HepG2 (cell line): ENCODE measurements at regions of chr11 and their contacts with region 1.

Region 1: GRCh38 chr11:36235750-36236149 is 53.5 kb downstream of the COMMD9 start:
- DNase-seq: peak; percentile 5
- ATAC-seq: no peak
- H3K4me3 ChIP-seq: no peak overlapping the region
- H3K27ac ChIP-seq: no peak overlapping the region
- H3K4me1 ChIP-seq: no peaks in the 10 kb centered on the region
- H3K27me3 ChIP-seq: no peaks in the 10 kb centered on the region
- CTCF ChIP-seq: no peak
- EP300 ChIP-seq: no peak
- POLR2A ChIP-seq: no peak
- RAD21 ChIP-seq: no peak

Region 2: DNA sequence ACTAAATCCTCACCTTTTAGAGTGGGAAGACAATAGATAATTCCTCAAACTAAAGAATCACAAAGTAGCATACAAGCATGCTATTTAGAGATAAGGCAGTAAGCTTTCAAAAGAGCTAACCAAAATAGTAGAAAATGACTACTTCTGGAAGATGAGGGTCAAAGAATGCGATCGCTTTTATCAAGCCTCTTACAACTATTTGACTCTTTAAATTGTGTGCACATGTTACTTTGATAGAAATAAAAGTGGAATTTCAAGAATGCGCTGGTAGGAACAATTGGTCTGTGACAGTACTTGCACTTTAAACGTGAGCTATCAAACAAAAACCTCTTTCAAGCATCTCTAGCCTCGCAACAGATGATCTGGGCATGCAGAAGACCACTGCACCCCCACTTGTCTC is 43.8 kb before region 1 on chr11:
- CTCF ChIA-PET with region 1: no interaction called
- POLR2A ChIA-PET with region 1: no interaction called
- in situ Hi-C with region 1: no loop called
- intact Hi-C with region 1: loop called (anchors 1 kb)
- DNase-seq: no peak
- ATAC-seq: no peak
- H3K4me3 ChIP-seq: no peak overlapping the region
- H3K27ac ChIP-seq: no peak overlapping the region
- H3K4me1 ChIP-seq: no peaks in the 10 kb centered on the region; the same call in 1 of the 2 replicates
- H3K27me3 ChIP-seq: no peaks in the 10 kb centered on the region
- CTCF ChIP-seq: no peak
- EP300 ChIP-seq: no peak
- POLR2A ChIP-seq: no peak
- RAD21 ChIP-seq: no peak

Region 3: GRCh38 chr11:36455658-36456111 is 219.9 kb after region 1 on chr11:
- CTCF ChIA-PET with region 1: no interaction called
- POLR2A ChIA-PET with region 1: no interaction called
- in situ Hi-C with region 1: no loop called
- intact Hi-C with region 1: no loop called
- DNase-seq: no peak
- ATAC-seq: peak; percentile 48
- H3K4me3 ChIP-seq: no peak overlapping the region
- H3K27ac ChIP-seq: no peak overlapping the region
- H3K4me1 ChIP-seq: peaks cover 23% of the 10 kb centered on the region
- H3K27me3 ChIP-seq: peaks cover 3 to 19% of the 10 kb centered on the region in 2 experiments; a peak in 2 of 5 replicates
- CTCF ChIP-seq: no peak
- EP300 ChIP-seq: no peak
- POLR2A ChIP-seq: no peak
- RAD21 ChIP-seq: no peak